ENCODE measurements at regions of chr2 and their contacts with region 1.

Region 1: GRCh38 chr2:166768393-166769123 is 119.7 kb upstream of the XIRP2 start:
- DNase-seq: no peak
- ATAC-seq: peak; percentile 77
- H3K4me3 ChIP-seq: no peak overlapping the region
- H3K27ac ChIP-seq: no peak overlapping the region
- H3K4me1 ChIP-seq: no peaks in the 10 kb centered on the region
- H3K27me3 ChIP-seq: no peaks in the 10 kb centered on the region
- CTCF ChIP-seq: no peak
- EP300 ChIP-seq: peak; percentile 45 to 53; a peak in 1 of 4 replicates
- POLR2A ChIP-seq: no peak
- RAD21 ChIP-seq: no peak

Region 2: GRCh38 chr2:166784296-166784946 is 15.9 kb after region 1 on chr2:
- CTCF ChIA-PET with region 1: interaction called, 4 read pairs
- POLR2A ChIA-PET with region 1: no interaction called
- RAD21 ChIA-PET with region 1: no interaction called
- SMC1A ChIA-PET with region 1: interaction called, 18 read pairs
- in situ Hi-C with region 1: no loop called
- intact Hi-C with region 1: no loop called
- DNase-seq: no peak
- ATAC-seq: no peak
- H3K4me3 ChIP-seq: no peak overlapping the region
- H3K27ac ChIP-seq: no peak overlapping the region
- H3K4me1 ChIP-seq: no peaks in the 10 kb centered on the region
- H3K27me3 ChIP-seq: no peaks in the 10 kb centered on the region
- CTCF ChIP-seq: no peak
- EP300 ChIP-seq: no peak
- POLR2A ChIP-seq: no peak
- RAD21 ChIP-seq: no peak

Measured in GM12878 (cell line).